Left ventricle myocardium superior (tissue), 1 donor: ENCODE measurements at regions of chr4 and their contacts with region 1.

Region 1: DNA sequence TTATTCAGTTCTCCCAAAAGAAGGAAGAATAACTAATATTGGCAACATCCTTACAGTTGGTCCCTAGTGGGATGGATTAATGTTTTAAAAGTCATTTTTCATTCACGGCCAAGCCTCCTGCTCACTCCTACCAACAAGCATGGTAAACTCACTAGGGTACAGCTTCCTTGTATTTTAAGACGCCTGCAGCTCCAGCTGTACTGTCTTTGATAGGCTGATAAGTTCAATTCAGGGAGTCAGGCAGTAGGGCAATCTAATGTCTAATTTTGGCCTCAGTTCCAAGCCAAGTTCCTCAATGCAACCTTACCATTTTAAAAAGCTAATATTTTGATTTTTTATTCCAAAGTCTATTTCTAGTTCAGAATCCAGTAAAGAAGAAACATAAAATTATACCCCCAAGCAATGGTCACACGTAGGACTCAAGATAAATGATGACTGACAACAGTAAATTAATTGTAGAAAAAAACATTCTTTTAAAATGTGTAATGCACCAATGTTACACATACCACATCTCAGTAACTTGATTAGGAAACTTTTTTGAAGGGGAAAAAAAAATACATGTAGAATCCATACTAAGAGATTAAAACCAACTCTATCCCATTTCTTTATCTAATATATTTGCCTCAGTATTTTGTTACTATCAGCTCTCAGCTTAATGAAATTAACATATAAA is 9.3 kb downstream of the LCORL start:
- DNase-seq: no peak
- ATAC-seq: peak; percentile 32

Region 2: DNA sequence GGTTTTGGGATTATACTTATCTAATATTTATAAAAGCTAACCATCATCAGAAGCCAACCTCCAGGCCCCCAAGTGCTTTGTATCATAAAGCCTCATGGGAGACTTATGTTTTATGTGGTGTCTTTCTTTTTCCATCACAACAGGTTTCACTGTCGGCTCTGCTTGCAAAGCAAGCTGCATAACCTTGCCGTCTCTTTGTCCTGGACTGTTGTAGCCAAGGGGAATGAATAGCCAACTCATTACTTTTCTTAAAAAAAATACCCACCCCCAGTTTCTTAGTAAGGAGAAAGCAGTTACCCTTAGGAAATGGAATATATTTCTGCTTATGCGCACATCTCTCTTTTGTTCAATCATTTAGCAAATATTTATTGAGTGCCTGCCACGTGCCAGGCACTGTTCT is 271.6 kb before region 1 on chr4:
- intact Hi-C with region 1: no loop called
- DNase-seq: no peak
- ATAC-seq: no peak

Region 3: DNA sequence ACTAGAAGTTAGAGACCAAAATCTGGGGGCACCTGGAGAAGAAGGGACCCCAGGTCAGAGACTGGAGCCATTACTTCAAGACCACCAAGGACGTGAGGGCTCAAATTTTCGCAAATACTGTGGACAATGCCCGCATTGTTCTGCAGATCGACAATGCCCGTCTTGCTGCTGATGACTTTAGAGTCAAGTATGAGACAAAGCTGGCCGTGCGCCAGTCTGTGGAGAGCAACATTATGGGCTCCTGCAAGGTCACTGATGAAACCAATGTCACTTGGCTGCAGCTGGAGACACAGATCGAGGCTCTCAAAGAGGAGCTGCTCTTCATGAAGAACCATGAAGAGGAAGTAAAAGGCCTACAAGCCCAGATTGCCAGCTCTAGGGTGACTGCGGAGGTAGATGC is 100.3 kb before region 1 on chr4:
- intact Hi-C with region 1: loop called (anchors 10 kb)
- DNase-seq: peak; percentile 32
- ATAC-seq: no peak

Region 4: DNA sequence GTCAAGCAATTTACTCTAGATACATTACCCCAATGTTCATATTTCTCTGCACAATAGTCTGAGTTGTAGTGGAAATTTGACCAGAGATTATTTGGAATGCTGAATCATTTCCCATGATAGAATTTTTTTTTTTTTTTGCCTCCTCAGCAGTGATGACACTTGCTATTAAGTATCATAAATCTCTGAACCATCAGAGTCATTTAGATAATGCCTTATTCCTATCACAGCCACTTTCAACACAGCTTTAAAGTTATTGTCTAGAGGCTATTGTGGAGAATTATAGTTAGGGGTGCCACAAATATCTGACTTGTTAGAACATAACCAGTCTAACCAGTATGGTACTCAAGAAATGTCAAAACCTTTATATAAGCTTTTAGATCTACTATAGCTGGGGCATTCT is 70.5 kb before region 1 on chr4:
- intact Hi-C with region 1: no loop called
- DNase-seq: no peak
- ATAC-seq: no peak

Region 5: DNA sequence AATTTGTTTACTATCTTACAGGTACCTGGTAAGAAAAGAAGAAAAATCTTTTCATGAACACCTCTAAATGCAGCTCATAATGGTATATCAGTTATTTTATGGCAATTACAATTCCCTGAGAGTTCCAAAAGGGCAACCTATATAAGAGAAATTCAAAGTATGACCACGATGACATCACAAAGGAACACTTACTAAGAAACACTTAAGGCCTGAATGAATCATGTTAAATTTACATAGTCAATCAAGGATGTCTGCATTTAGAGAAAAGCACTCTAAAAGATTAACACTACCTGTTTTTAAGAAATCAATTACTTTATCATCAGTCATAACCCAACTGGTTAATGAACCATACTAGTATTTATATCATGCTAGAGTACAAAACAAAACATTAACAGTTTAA is 54.6 kb before region 1 on chr4:
- intact Hi-C with region 1: no loop called
- DNase-seq: no peak
- ATAC-seq: no peak

Region 6: DNA sequence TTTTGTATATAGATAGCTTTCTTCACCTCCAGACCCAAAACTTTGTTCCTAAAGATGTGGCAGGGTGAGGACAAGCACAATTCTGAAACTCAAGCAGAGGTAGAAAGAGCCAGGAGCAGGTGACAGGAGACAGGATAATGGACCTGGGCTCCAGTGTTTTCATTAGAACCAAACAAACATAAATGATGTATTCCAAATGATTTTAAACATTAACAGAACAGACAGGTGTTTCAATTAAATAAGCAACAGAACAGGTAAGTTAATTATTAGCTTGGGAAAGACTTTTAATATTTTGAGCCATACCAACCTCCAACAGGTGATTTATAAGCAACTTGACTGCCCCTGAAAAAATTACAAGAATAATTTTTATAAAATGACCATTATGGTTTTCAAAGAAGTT is 468.7 kb after region 1 on chr4:
- intact Hi-C with region 1: no loop called
- DNase-seq: no peak
- ATAC-seq: no peak